Posterior vena cava (tissue), 2 donors: ENCODE measurements at regions of chr12 and their contacts with region 1.

Region 1: DNA sequence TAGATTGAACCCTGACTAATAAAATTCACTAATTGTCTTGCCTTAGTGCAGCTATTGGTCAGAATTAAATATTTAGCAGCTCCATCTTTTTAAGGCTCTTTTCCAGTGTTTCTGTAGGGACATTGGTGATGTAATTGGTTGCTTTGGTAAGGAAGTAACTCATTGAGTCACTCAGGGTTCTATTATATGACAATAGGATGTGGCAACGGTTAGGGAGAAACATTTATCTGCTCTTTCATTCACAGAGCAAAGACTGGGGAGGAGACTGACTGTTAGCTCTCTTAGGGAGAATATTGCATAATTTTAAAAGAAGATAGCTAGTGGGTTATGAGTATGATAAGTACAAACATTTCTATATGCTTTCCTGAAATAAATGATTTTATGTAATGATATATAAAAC is 616.5 kb downstream of the TRHDE start:
- DNase-seq: no peak

Region 2: DNA sequence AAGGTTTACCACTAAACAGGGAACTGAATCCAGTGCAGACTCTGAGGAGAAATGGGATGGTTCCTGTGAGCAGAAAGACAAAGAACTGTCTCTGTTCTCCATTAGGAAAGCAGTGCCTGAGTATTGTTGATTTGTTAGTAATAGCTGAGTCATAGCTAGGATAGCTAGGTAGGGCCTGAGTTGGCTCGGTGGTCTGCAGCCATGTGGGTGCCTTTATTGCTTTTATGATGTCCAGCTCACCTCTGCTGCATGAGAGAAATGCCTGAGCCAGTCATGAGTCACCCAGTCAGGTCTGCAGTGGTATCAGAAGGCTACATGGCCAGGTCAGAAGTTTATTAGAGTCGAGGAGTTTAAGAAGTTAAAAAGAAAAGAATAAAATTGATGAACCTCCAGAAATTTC is 592.3 kb before region 1 on chr12:
- intact Hi-C with region 1: no loop called
- DNase-seq: no peak

Region 3: GRCh38 chr12:72622556-72622955 is 266.1 kb before region 1 on chr12:
- intact Hi-C with region 1: loop called in 1 of 2 experiments (anchors 5 kb)
- DNase-seq: no peak

Region 4: DNA sequence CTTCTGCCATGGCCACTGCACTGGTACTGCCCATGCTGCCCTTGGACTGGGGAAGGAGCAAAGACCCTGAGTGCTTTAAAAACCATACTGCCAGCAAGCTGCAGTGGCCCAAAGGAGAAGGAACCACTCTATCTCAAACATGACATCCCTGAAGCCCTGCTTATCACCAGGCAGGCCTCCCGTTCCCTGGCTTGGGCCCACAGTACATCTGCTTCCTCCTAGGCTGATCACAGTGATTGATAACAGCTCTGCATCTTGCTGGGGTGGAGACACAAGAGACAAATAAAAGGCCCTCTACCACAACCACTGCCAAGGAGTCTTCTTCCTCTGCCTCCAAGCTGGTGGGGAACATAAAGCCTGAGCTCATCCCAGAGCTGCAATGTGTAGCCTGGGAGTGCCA is 49.0 kb before region 1 on chr12:
- intact Hi-C with region 1: loop called in 1 of 2 experiments (anchors 1 kb)
- DNase-seq: no peak

Region 5: DNA sequence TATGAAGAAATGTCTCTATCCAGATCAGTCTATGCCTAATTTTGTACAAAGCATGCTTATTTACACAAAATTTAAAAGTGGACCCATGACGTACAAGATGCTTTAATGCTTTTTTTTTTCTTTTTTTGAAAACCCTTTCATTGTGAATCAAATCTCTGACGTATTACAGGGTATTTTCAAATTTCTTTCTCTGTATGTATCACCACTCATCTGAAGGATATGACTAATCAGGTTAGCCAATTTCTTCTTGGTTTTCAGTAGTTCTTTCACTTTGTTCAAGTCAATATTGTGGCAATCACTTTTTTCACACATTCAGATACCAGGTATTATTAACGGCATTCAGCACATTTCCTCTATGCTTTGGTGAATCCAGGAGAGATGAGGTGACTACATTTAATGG is 68.8 kb after region 1 on chr12:
- intact Hi-C with region 1: no loop called
- DNase-seq: no peak